ENCODE measurements at regions of chr2 and their contacts with region 1.

Region 1: GRCh38 chr2:222572751-222573174 is 83.1 kb downstream of the FARSB start:
- DNase-seq: no peak
- H3K4me3 ChIP-seq: no peak overlapping the region
- H3K27ac ChIP-seq: no peak overlapping the region
- H3K4me1 ChIP-seq: no peaks in the 10 kb centered on the region; a peak in 1 of 7 replicates
- H3K27me3 ChIP-seq: peaks cover 0 to 1% (median 0%) of the 10 kb centered on the region in 4 experiments; a peak in 1 of 7 replicates
- CTCF ChIP-seq: no peak
- EP300 ChIP-seq: no peak
- POLR2A ChIP-seq: no peak
- RAD21 ChIP-seq: no peak

Region 2: GRCh38 chr2:222318026-222318711 is 254.6 kb before region 1 on chr2:
- CTCF ChIA-PET with region 1: interaction called, 13 read pairs
- POLR2A ChIA-PET with region 1: no interaction called
- DNase-seq: peak in 1 of 2 experiments; percentile 89
- H3K4me3 ChIP-seq: peak overlapping the region; percentile 41 to 62 (median 52); a peak in 7 of 8 replicates
- H3K27ac ChIP-seq: no peak overlapping the region
- H3K4me1 ChIP-seq: peaks cover 0 to 9% (median under 1%) of the 10 kb centered on the region in 4 experiments; a peak in 5 of 7 replicates
- H3K27me3 ChIP-seq: peaks cover 66 to 91% (median 79%) of the 10 kb centered on the region in 4 experiments
- CTCF ChIP-seq: peak in 2 of 3 experiments; percentile 17 to 33; a peak in 2 of 4 replicates
- EP300 ChIP-seq: no peak
- POLR2A ChIP-seq: no peak
- RAD21 ChIP-seq: peak; percentile 51 to 59

Region 3: DNA sequence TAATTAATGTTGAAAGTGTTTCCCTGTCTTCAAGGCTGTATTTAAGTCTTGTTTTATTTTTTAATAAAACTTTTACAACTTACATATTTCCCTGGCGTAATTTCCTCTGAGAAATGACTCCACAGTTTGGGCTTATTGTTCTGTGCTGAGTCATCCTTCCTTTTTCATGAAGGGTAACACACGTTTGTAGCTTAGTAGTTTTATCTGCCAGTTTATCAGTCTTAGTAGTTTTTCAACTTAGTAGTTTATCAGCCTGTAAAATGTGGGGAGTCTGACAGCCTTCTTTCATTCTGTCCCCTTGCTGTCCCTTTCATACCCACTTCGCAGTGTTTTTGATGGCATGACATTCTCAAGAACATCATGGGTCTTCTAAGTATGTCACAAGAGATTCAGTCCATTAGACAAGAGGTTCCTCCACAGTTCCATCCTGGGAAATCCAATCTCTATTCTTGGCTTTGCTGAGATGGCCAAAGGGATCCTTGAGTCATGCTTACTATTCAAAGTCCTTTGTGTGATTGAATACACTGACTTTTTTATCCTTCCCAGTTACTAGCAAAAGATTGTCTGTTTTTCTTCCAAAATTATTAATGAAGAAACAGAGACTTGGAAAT is 208.4 kb before region 1 on chr2:
- CTCF ChIA-PET with region 1: no interaction called
- POLR2A ChIA-PET with region 1: no interaction called
- DNase-seq: no peak
- H3K4me3 ChIP-seq: no peak overlapping the region
- H3K27ac ChIP-seq: no peak overlapping the region
- H3K4me1 ChIP-seq: peaks cover 0 to 7% (median 4%) of the 10 kb centered on the region in 4 experiments; a peak in 2 of 7 replicates
- H3K27me3 ChIP-seq: no peaks in the 10 kb centered on the region
- CTCF ChIP-seq: no peak
- EP300 ChIP-seq: no peak
- POLR2A ChIP-seq: no peak
- RAD21 ChIP-seq: no peak

Region 4: GRCh38 chr2:222440673-222441422 is 131.9 kb before region 1 on chr2:
- CTCF ChIA-PET with region 1: no interaction called
- POLR2A ChIA-PET with region 1: no interaction called
- DNase-seq: no peak
- H3K4me3 ChIP-seq: no peak overlapping the region
- H3K27ac ChIP-seq: no peak overlapping the region
- H3K4me1 ChIP-seq: no peaks in the 10 kb centered on the region
- H3K27me3 ChIP-seq: no peaks in the 10 kb centered on the region
- CTCF ChIP-seq: no peak
- EP300 ChIP-seq: no peak
- POLR2A ChIP-seq: no peak
- RAD21 ChIP-seq: no peak

Region 5: DNA sequence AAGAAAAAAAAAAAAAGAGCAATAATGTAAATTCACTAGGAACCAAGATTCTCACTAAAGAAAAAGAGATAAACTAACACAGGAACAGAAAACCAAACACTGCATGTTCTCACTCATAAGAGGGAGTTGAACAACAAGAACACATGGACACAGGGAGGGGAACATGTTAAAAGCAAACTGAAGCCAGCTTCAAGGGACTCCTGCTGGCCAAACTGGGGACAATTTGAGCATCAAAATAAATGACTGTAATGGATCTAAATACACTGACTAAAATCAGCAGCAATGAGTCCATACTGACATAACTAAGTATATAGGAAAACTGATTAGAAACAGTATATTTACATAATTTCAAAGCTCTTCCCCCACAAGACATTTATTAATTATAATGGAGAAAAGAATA is 10.2 kb after region 1 on chr2:
- CTCF ChIA-PET with region 1: interaction called, 12 read pairs
- POLR2A ChIA-PET with region 1: no interaction called
- DNase-seq: no peak
- H3K4me3 ChIP-seq: no peak overlapping the region
- H3K27ac ChIP-seq: no peak overlapping the region
- H3K4me1 ChIP-seq: no peaks in the 10 kb centered on the region
- H3K27me3 ChIP-seq: no peaks in the 10 kb centered on the region
- CTCF ChIP-seq: peak in 2 of 3 experiments; percentile 2 to 34; a peak in 1 of 4 replicates
- EP300 ChIP-seq: no peak
- POLR2A ChIP-seq: no peak
- RAD21 ChIP-seq: peak in 1 of 2 experiments; percentile 17; a peak in 2 of 4 replicates